ENCODE measurements at regions of chr17 and their contacts with region 1.

Region 1: DNA sequence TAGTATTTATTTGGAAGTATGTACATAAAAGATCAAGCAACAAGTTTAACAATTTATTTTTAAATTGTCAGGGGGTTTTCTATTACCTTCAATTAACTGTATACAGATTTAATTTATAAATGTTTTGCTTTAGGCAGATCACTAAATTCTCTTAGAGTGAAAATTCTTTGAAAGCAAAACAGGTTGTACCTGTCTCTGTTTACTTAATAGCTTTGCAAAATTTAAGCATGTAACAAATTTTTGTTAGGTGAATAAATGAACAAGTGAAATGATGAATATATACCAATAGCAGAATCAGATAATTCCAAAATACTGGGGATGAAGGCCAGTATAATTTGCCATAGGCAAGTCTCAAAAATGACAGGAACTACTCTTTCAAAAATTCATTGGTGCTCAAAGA is 86.7 kb downstream of the BRIP1 start:
- DNase-seq: no peak
- ATAC-seq: no peak
- H3K4me3 ChIP-seq: no peak overlapping the region
- H3K27ac ChIP-seq: no peak overlapping the region
- H3K4me1 ChIP-seq: peaks cover under 1% of the 10 kb centered on the region; the same call in 1 of the 2 replicates
- H3K27me3 ChIP-seq: no peaks in the 10 kb centered on the region
- CTCF ChIP-seq: no peak
- POLR2A ChIP-seq: no peak
- RAD21 ChIP-seq: no peak

Region 2: DNA sequence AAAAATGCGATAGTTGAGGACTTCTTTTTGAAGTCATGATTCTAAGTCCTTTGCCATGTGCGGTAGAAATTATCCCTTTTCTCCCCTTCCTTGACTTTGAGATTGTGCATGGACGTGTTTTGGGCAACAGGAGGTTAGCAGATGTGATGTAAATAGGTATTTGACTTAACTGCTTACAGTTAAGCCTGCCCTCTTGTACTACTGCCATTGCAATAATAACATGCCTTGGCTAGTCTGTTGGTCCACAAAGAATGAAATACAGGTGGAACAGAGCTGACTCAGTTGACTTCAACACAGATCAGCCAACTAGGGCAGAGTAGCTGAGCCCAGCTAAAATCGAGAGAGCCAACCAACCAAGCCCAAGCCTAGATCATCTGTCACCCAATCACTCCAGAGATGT is 38.8 kb before region 1 on chr17:
- CTCF ChIA-PET with region 1: interaction called, 3 read pairs
- POLR2A ChIA-PET with region 1: no interaction called
- dilution Hi-C with region 1: no loop called
- in situ Hi-C with region 1: no loop called
- intact Hi-C with region 1: loop called (anchors 5 kb)
- DNase-seq: no peak
- ATAC-seq: no peak
- H3K4me3 ChIP-seq: no peak overlapping the region
- H3K27ac ChIP-seq: no peak overlapping the region
- H3K4me1 ChIP-seq: no peaks in the 10 kb centered on the region
- H3K27me3 ChIP-seq: no peaks in the 10 kb centered on the region
- CTCF ChIP-seq: no peak
- POLR2A ChIP-seq: no peak
- RAD21 ChIP-seq: no peak

Region 3: GRCh38 chr17:61878984-61879612 is 102.5 kb after region 1 on chr17:
- CTCF ChIA-PET with region 1: no interaction called
- POLR2A ChIA-PET with region 1: no interaction called
- dilution Hi-C with region 1: no loop called
- in situ Hi-C with region 1: no loop called
- intact Hi-C with region 1: no loop called
- DNase-seq: peak; percentile 13
- ATAC-seq: no peak
- H3K4me3 ChIP-seq: no peak overlapping the region
- H3K27ac ChIP-seq: no peak overlapping the region
- H3K4me1 ChIP-seq: no peaks in the 10 kb centered on the region
- H3K27me3 ChIP-seq: no peaks in the 10 kb centered on the region
- CTCF ChIP-seq: no peak
- POLR2A ChIP-seq: no peak
- RAD21 ChIP-seq: no peak